Naive thymus-derived CD4-positive, alpha-beta T cell (primary cell): ENCODE measurements at regions of chr11 and their contacts with region 1.

Region 1: DNA sequence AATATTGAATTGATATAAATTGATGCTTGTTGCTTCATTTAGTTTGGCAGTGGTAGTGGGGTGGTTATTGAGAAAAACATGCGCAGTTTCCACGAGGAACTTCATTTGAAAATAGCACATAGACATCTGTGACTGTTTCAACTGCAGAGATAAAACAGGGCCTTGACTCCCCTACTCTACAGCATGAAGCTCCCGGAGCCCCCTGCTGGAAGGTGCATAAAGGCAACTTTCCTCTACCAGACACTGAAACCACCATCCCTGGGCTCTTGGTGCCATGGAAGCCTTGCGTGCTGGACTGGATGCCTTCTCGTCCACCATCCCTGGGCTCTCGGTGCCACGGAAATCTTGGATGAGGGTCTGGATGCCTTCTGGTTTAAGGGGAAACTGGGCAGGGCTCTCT is 195.9 kb downstream of the CSNK2A3 start:
- DNase-seq: peak in 8 of 9 donors; percentile 28 to 79 (median 72)
- ATAC-seq: peak; percentile 75
- H3K4me3 ChIP-seq: no peak overlapping the region
- H3K4me3 Mint-ChIP-seq: peak overlapping the region in 6 of 10 donors; percentile 75 to 92 (median 84)
- H3K27ac ChIP-seq: peak overlapping the region; percentile 72
- H3K27ac Mint-ChIP-seq: peak overlapping the region in 8 of 9 donors; percentile 86 to 99 (median 94)
- H3K4me1 ChIP-seq: peaks cover 11 to 28% of the 10 kb centered on the region in 2 donors
- H3K4me1 Mint-ChIP-seq: peaks cover 15 to 49% (median 44%) of the 10 kb centered on the region in 7 donors
- H3K27me3 ChIP-seq: no peaks in the 10 kb centered on the region
- H3K27me3 Mint-ChIP-seq: peaks cover 0 to 8% (median 0%) of the 10 kb centered on the region in 5 donors

Region 2: GRCh38 chr11:11265994-11266606 is 108.9 kb after region 1 on chr11:
- CTCF ChIA-PET with region 1: no interaction called
- POLR2A ChIA-PET with region 1: no interaction called
- intact Hi-C with region 1: loop called in 1 of 2 experiments (anchors 1 kb)
- DNase-seq: peak in 8 of 9 donors; percentile 11 to 68 (median 28)
- ATAC-seq: peak; percentile 66
- H3K4me3 ChIP-seq: no peak overlapping the region
- H3K4me3 Mint-ChIP-seq: no peak overlapping the region
- H3K27ac ChIP-seq: no peak overlapping the region
- H3K27ac Mint-ChIP-seq: no peak overlapping the region
- H3K4me1 ChIP-seq: no peaks in the 10 kb centered on the region
- H3K4me1 Mint-ChIP-seq: peaks cover 0 to 3% (median 0%) of the 10 kb centered on the region in 7 donors
- H3K27me3 ChIP-seq: no peaks in the 10 kb centered on the region
- H3K27me3 Mint-ChIP-seq: peaks cover 0 to 11% (median 8%) of the 10 kb centered on the region in 5 donors

Region 3: DNA sequence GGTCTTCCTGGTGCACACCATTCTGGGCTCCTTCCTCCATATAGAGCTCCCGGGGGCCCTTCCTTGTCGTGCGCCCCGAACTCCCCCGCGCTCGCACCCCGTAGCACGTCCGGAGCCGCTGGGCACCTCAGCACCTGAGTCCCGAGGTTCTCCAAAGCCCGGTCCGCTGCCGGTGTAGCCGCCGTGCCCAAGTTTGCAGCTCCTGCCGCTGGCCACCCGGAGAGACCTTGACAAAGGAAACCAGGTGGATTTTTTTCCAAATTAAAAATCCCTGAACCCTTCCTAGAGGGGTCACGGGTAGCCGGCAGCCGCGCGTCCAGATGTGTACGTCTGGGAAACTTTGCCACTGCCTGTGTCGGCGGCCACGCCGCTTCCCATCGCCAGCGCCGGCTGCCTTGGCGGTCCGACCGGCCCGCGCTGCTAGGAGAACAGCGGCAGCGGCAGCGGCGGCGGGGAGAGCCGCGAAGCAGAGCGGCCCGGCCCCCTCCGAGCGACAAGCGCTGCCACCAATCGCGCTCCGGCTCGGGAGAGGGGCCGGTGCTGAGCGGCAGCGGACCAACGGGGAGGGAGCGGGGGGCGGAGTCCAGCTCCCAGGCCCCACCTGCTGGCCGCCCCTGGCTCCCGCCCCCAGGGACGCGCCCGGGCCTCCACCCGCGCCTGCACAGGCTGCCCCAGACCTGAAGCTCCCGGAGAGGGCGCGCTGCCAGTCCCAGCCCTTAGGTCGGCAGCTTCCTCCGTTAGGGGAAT is 464.6 kb after region 1 on chr11 and contains the start of gene GALNT18:
- CTCF ChIA-PET with region 1: no interaction called
- POLR2A ChIA-PET with region 1: no interaction called
- intact Hi-C with region 1: loop called in 1 of 2 experiments (anchors 2 kb)
- DNase-seq: peak; percentile 11 to 89 (median 27)
- ATAC-seq: peak; percentile 95
- H3K4me3 ChIP-seq: peak within 1 kb of the TSS; percentile 17
- H3K4me3 Mint-ChIP-seq: peak within 1 kb of the TSS in 9 of 10 donors; percentile 57 to 89 (median 65)
- H3K27ac ChIP-seq: no peak within 1 kb of the TSS
- H3K27ac Mint-ChIP-seq: no peak within 1 kb of the TSS
- H3K4me1 ChIP-seq: peaks cover 0 to 7% of the 10 kb centered on the region in 2 donors
- H3K4me1 Mint-ChIP-seq: peaks cover 0 to 15% (median 8%) of the 10 kb centered on the region in 7 donors
- H3K27me3 ChIP-seq: peaks cover 3 to 6% of the 10 kb centered on the region in 2 donors
- H3K27me3 Mint-ChIP-seq: peaks cover 30 to 66% (median 45%) of the 10 kb centered on the region in 5 donors
- total RNA-seq, gene GALNT18: 0.20 to 1.7 TPM in 2 of 5 experiments, not detected in the others